ENCODE measurements at regions of chr1 and their contacts with region 1.

Region 1: DNA sequence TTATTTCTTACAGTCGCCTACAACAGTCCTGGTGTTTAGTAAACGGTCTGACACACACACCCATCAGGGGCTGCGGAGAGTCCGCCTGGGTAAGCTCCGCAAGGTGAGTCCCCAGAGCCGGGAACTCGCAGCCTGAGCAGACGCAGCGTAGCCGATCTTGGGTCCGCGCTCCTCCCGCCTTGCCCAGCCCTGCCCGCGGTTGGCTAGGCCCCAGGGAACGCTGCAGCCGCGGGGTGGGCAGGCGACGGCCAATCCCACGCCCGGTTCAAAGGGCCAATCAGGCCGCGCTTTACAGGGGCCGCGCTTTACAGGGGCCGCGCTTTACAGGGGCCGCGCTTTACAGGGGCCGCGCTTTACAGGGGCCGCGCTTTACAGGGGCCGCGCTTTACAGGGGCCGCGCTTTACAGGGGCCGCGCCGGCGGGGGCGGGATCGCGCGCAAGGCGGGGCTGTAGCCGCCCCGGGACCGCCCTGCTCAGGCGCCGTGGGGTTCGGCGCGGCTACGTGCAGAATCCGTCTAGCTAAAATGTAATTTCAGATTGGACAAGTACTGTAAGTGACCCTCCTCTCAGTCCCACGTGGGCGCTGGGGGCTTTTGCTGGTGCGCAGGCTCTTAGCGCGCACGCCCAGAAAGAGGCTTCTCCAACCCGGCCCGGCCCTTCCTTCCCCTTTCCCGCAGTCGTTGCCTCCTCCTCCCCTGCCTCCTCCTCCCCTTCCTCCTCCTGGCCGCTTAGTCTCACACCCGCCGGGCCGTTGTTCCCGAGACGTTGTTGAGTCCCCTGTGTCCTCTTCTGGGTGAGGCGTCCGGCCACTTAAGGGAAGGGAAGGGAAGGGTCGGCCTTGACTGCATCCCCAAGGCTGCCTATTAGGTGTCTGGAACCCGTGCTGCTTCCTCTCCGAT is at the start of gene FGGY:
- DNase-seq: peak; percentile 89
- ATAC-seq: peak; percentile 97
- H3K4me3 ChIP-seq: peak within 1 kb of the TSS; percentile 85 to 97
- H3K27ac ChIP-seq: peak within 1 kb of the TSS; percentile 100
- H3K4me1 ChIP-seq: peaks cover 16% of the 10 kb centered on the region
- H3K27me3 ChIP-seq: no peaks in the 10 kb centered on the region
- CTCF ChIP-seq: no peak
- total RNA-seq, gene FGGY: 15.5 TPM

Region 2: DNA sequence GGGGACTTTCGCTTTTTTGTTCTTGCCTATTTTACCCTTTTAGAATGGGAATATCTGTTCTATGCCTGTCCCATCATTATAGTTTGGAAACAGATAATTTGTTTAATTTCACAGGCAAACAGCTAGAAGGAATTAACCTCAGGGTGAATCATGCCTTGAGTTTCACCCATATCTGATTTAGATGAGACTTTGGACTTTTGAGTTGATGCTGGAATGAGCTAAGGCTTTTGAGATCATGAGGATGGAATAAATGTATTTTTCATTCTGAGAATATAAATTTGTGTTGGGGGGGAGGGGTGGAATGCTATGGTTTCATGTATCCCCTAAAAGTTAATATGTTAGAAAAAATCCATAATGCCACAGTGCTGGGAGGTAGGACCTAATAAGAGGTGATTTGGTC is 663.5 kb before region 1 on chr1:
- CTCF ChIA-PET with region 1: no interaction called
- POLR2A ChIA-PET with region 1: interaction called, 11 read pairs
- in situ Hi-C with region 1: no loop called
- intact Hi-C with region 1: no loop called
- DNase-seq: no peak
- ATAC-seq: no peak
- H3K4me3 ChIP-seq: no peak overlapping the region
- H3K27ac ChIP-seq: no peak overlapping the region
- H3K4me1 ChIP-seq: no peaks in the 10 kb centered on the region
- H3K27me3 ChIP-seq: no peaks in the 10 kb centered on the region; the same call in 1 of the 2 replicates
- CTCF ChIP-seq: no peak

Region 3: DNA sequence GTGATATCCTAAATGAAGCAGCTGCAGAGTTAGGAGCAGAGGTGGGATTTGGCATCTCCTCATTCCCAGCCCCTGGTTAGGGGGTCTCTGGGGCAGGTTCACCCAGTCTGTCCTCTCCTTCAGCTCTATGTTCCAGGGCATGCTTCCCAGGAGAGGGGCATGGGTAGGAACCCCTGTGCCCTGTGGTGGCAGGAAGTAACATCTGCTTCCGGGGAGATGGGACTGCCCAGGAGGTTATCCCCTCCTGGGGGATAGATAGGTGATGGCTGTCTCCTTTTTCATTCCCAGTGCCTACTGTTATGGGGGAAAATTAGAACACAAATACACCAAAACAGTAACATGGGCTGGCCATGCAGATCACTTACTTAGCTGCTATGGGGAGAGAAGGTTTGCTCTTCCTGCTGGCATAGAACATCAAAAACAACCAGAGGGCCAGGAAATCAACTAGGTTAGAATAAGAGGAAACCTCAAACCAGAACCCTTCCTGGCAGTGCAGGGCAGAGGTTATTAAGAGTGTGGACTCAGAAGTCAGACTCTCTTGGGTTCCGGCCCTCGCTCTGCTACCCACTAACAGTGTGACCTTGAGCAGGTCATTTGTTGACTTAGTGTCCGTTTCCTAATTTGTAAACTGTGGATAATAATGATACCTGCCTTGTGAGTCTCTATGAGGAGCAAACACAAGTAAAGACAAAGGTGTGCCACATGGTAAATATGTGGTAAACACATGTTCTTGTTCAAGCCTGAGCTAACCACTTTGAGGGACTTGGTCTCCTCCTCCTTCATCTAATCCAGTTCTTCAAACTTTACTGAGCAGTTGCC is 354.9 kb before region 1 on chr1:
- CTCF ChIA-PET with region 1: no interaction called
- POLR2A ChIA-PET with region 1: no interaction called
- in situ Hi-C with region 1: no loop called
- intact Hi-C with region 1: no loop called
- DNase-seq: no peak
- ATAC-seq: no peak
- H3K4me3 ChIP-seq: no peak overlapping the region
- H3K27ac ChIP-seq: no peak overlapping the region
- H3K4me1 ChIP-seq: no peaks in the 10 kb centered on the region
- H3K27me3 ChIP-seq: no peaks in the 10 kb centered on the region
- CTCF ChIP-seq: no peak

Region 4: GRCh38 chr1:59146651-59147358 is 149.8 kb before region 1 on chr1:
- CTCF ChIA-PET with region 1: no interaction called
- POLR2A ChIA-PET with region 1: no interaction called
- in situ Hi-C with region 1: no loop called
- intact Hi-C with region 1: loop called (anchors 5 kb)
- DNase-seq: no peak
- ATAC-seq: peak; percentile 81
- H3K4me3 ChIP-seq: peak overlapping the region; percentile 52 to 74
- H3K27ac ChIP-seq: peak overlapping the region; percentile 89
- H3K4me1 ChIP-seq: peaks cover 45% of the 10 kb centered on the region
- H3K27me3 ChIP-seq: no peaks in the 10 kb centered on the region
- CTCF ChIP-seq: peak; percentile 29

Measured in Panc1 (cell line).